ENCODE measurements at regions of chr10 and their contacts with region 1.

Region 1: GRCh38 chr10:88990384-88991160 is at the start of gene FAS:
- DNase-seq: peak; percentile 91
- ATAC-seq: peak; percentile 82
- H3K4me3 Mint-ChIP-seq: peak within 1 kb of the TSS; percentile 87
- H3K27ac Mint-ChIP-seq: peak within 1 kb of the TSS; percentile 94
- H3K4me1 Mint-ChIP-seq: peaks cover 61% of the 10 kb centered on the region
- H3K27me3 Mint-ChIP-seq: no peaks in the 10 kb centered on the region
- total RNA-seq, gene FAS: 34.1 to 34.9 TPM

Region 2: DNA sequence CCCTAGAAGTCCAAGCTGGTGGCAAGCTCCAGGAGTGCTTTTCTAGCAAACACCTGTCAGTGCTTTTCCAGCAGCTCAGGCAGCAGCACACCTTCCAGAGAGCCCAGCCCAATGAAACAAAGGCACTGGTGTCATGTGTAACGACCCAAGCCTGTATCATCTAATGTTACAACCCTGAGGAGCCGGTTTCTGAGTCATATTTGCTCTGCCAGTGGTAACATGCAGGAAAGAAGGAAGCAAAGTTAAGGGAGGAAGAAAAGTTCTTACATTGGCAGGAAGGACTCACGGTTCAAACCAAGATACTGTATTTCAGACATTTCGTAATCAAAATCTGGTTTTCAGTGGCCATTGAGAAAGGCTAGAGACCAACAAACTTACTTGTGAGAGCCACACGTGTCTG is 138.9 kb before region 1 on chr10 and contains the start of gene ANKRD22:
- CTCF ChIA-PET with region 1: interaction called, 4 read pairs
- POLR2A ChIA-PET with region 1: no interaction called
- intact Hi-C with region 1: loop called in 1 of 2 experiments (anchors 1 kb)
- DNase-seq: no peak
- ATAC-seq: no peak
- H3K4me3 Mint-ChIP-seq: no peak within 1 kb of the TSS
- H3K27ac Mint-ChIP-seq: no peak within 1 kb of the TSS
- H3K4me1 Mint-ChIP-seq: peaks cover 18% of the 10 kb centered on the region
- H3K27me3 Mint-ChIP-seq: peaks cover 9% of the 10 kb centered on the region
- total RNA-seq, gene ANKRD22: 0.37 TPM

Region 3: GRCh38 chr10:89003344-89003743 is 12.8 kb after region 1 on chr10:
- CTCF ChIA-PET with region 1: interaction called, 16 read pairs
- POLR2A ChIA-PET with region 1: interaction called, 8 read pairs
- intact Hi-C with region 1: loop called (anchors 1 kb)
- DNase-seq: no peak
- ATAC-seq: peak; percentile 65
- H3K4me3 Mint-ChIP-seq: no peak overlapping the region
- H3K27ac Mint-ChIP-seq: no peak overlapping the region
- H3K4me1 Mint-ChIP-seq: peaks cover 47% of the 10 kb centered on the region
- H3K27me3 Mint-ChIP-seq: no peaks in the 10 kb centered on the region

Region 4: DNA sequence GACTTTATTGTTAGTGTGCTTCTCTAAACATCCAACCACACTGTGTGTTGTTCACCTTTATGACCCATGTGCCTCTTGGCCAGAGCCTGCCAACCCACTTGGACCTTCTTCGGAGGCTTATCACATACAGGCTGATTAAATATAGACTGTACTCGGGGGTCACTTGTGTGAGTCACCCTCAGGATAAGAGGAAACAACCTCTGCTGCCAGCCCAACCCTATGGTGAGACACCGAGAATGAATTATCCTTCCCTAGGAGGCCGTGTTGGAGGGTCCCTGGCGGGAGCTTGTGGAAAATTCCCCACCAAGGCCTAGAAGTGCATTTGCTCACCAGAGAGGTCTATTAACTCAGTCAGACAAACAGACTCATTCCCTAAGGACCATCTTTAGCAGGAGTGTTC is 63.0 kb after region 1 on chr10:
- CTCF ChIA-PET with region 1: no interaction called
- POLR2A ChIA-PET with region 1: no interaction called
- intact Hi-C with region 1: no loop called
- DNase-seq: no peak
- ATAC-seq: no peak
- H3K4me3 Mint-ChIP-seq: no peak overlapping the region
- H3K27ac Mint-ChIP-seq: no peak overlapping the region
- H3K4me1 Mint-ChIP-seq: no peaks in the 10 kb centered on the region
- H3K27me3 Mint-ChIP-seq: no peaks in the 10 kb centered on the region

Region 5: DNA sequence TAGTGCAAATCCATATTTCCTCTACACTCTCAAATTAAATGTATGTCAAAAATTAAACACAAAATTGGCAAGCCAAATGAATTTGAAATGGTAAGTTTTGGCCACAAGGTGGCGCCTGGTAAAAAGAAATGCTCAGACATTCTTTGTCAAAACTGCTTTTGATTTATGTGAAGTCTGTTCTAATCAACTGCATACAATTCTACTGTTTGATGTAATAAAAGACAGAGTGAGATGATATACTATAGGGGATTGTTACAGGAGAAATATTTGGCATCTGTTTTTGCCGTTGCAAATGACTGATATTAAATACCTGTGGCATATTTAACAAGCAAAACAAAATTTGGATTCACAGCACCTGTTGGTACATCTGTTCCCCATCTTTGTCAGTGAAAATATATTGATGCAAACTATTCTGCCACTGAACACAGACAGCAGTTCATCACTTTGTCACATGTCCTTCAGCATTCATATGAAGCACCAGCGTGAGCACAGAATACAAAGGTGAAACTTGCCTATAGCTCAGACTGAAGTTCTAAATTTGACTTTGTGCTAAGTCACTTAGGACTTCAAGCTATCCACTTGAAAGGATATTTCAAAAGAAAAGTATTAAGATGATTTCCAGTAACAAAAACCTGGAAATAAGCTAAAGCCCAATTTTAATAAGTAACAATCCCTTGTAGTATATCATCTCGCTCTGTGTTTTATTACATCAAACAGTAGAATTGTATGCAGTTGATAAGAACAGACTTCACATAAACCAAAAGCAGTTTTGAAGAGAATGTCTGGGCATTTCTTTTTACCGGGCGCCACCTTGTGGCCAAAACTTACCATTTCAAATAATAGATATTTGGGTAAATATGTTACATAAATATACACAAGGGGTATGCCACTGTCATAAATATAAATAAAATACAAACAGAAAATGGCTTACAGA is 226.8 kb after region 1 on chr10:
- CTCF ChIA-PET with region 1: interaction called, 14 read pairs
- POLR2A ChIA-PET with region 1: no interaction called
- intact Hi-C with region 1: no loop called
- DNase-seq: peak; percentile 76
- ATAC-seq: peak; percentile 55
- H3K4me3 Mint-ChIP-seq: no peak overlapping the region
- H3K27ac Mint-ChIP-seq: no peak overlapping the region
- H3K4me1 Mint-ChIP-seq: peaks cover 9% of the 10 kb centered on the region
- H3K27me3 Mint-ChIP-seq: no peaks in the 10 kb centered on the region

Region 6: GRCh38 chr10:89701238-89702120 is 710.9 kb after region 1 on chr10 and contains the start of gene KIF20B:
- CTCF ChIA-PET with region 1: no interaction called
- POLR2A ChIA-PET with region 1: no interaction called
- intact Hi-C with region 1: loop called in 1 of 2 experiments (anchors 2 kb)
- DNase-seq: peak; percentile 97
- ATAC-seq: peak; percentile 97
- H3K4me3 Mint-ChIP-seq: peak within 1 kb of the TSS; percentile 99
- H3K27ac Mint-ChIP-seq: peak within 1 kb of the TSS; percentile 98
- H3K4me1 Mint-ChIP-seq: peaks cover 41% of the 10 kb centered on the region
- H3K27me3 Mint-ChIP-seq: no peaks in the 10 kb centered on the region
- total RNA-seq, gene KIF20B: 74.6 to 86.2 TPM

Measured in activated CD4-positive, alpha-beta T cell treated with anti-CD3 and anti-CD28 coated beads for 36 hours (primary cell).